BJ (cell line): ENCODE measurements at regions of chr22 and their contacts with region 1.

Region 1: DNA sequence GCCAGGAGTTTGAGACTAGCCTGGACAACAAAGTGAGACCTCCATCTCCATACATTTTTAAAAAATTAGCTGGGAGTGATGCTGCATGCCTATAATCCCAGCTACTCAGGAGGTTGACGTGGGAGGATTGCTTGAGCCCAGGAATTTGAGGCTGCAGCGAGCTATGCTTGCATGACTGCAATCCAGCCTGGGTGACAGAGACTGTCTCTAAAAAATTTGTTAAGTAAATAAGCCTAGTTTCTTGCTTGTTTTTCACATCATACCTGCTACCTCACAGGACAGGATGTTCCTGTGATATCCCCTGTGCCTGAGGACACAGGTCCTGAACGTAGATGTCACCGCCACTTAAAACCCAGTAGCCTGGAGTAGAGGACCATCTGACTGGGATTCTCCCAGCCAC is 348.6 kb downstream of the MN1 start:
- DNase-seq: no peak
- H3K4me3 ChIP-seq: no peak overlapping the region
- H3K27me3 ChIP-seq: no peaks in the 10 kb centered on the region
- CTCF ChIP-seq: no peak

Region 2: DNA sequence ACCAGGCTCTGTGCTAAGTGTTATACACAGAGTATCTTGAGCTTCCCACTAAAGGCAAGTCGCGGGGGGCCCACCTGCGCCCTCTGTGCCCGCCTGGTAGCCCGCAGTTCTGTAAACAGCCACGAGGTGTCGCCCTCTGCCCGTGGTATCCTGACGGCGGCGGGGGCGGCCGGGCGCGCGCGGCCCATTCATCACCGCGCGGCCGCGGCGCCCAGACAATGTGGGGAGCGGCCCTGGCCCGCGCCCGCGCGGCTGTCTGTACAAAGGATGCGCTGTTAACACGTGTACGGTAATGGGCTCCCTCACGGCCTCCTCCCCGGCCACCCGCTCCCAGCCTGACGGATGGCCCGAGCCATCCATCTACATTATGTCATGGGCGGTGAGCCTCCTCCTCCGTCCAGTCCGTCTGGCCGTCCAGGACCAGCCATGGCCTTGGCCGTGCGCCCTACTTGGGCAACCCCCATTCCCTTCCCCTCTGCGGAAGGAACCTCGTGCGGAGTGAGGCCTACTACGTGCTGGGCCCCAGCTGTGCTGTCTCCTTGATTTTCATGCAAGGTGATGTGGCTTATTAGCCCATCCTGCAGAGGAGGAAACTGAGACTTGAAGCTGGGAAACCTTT is 696.1 kb before region 1 on chr22:
- CTCF ChIA-PET with region 1: no interaction called
- POLR2A ChIA-PET with region 1: interaction called, 10 read pairs
- DNase-seq: no peak
- H3K4me3 ChIP-seq: peak overlapping the region; percentile 26; the same call in 1 of the 2 replicates
- H3K27me3 ChIP-seq: no peaks in the 10 kb centered on the region
- CTCF ChIP-seq: peak; percentile 65

Region 3: DNA sequence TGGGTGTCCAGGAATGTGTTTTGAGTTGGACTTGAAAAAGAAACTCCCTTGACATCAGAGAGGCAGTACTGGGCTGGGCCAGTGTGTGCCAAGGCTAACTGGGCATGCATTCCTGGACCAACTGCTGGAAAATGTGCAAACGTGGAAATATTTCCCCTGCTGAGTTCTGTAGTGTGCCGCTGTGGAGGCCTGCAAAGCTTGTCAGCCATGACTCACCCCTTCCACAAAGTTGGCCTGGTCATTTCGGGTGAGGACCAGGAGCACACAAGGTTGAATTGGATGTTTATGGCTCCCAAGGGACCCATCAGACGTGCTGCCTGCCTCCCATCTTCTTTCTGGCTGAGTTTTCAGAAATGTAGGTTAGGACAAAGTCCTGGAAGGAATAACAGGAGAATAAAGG is 282.4 kb before region 1 on chr22:
- CTCF ChIA-PET with region 1: no interaction called
- POLR2A ChIA-PET with region 1: no interaction called
- DNase-seq: no peak
- H3K4me3 ChIP-seq: no peak overlapping the region
- H3K27me3 ChIP-seq: peaks cover 6% of the 10 kb centered on the region
- CTCF ChIP-seq: no peak

Region 4: GRCh38 chr22:27223317-27224177 is 229.4 kb before region 1 on chr22:
- CTCF ChIA-PET with region 1: no interaction called
- POLR2A ChIA-PET with region 1: no interaction called
- DNase-seq: peak; percentile 83
- H3K4me3 ChIP-seq: no peak overlapping the region
- H3K27me3 ChIP-seq: no peaks in the 10 kb centered on the region; the same call in 1 of the 2 replicates
- CTCF ChIP-seq: no peak

Region 5: DNA sequence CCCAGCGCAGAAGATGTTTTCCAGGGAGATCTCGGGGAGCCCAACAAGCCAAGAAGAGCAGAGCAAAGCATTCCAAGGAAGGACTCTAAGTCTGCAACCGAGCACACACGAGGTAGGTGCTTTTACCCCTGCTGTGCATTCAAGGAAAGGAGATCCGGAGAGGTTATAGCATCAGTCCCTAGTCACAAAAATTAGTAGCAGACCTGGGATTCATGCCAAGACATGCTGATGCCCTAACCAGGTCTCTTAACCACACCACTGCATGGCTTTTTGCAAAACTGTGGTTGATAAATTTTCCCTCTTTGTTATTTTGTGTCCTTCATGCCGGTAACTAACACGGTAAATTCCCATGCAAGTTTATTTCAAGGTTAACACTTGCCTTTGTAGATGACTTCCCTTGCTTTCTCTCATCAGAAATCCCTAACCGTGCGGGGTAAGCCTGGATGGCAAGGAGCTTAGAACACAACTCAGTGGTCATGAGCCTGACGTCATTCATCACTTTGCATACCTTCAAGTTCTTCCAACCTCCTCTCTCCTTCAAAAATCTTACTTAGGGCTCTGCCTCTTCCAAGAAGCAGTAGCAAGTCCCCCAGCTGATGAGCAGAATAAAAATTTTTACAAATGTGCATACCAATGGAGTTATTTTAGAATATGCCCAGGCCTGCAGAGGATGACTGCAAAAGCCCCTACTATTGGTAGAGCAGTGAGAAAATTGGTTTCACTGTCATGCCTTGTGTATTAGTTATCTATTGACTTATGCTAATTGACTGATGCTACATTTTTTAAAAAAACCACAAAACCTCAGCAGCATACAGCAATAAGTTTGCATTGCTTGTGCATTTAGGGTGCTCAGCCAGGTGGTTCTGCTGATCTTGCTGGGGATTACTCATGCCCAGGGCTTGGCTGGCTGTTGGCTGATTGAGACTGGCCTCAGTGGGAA is 116.5 kb before region 1 on chr22:
- CTCF ChIA-PET with region 1: no interaction called
- POLR2A ChIA-PET with region 1: no interaction called
- DNase-seq: no peak
- H3K4me3 ChIP-seq: no peak overlapping the region
- H3K27me3 ChIP-seq: peaks cover 5% of the 10 kb centered on the region
- CTCF ChIP-seq: no peak

Region 6: GRCh38 chr22:27489176-27489675 is 36.3 kb after region 1 on chr22:
- CTCF ChIA-PET with region 1: no interaction called
- POLR2A ChIA-PET with region 1: no interaction called
- DNase-seq: no peak
- H3K4me3 ChIP-seq: no peak overlapping the region
- H3K27me3 ChIP-seq: no peaks in the 10 kb centered on the region
- CTCF ChIP-seq: no peak